CD14-positive monocyte (primary cell): ENCODE measurements at regions of chr9 and their contacts with region 1.

Region 1: DNA sequence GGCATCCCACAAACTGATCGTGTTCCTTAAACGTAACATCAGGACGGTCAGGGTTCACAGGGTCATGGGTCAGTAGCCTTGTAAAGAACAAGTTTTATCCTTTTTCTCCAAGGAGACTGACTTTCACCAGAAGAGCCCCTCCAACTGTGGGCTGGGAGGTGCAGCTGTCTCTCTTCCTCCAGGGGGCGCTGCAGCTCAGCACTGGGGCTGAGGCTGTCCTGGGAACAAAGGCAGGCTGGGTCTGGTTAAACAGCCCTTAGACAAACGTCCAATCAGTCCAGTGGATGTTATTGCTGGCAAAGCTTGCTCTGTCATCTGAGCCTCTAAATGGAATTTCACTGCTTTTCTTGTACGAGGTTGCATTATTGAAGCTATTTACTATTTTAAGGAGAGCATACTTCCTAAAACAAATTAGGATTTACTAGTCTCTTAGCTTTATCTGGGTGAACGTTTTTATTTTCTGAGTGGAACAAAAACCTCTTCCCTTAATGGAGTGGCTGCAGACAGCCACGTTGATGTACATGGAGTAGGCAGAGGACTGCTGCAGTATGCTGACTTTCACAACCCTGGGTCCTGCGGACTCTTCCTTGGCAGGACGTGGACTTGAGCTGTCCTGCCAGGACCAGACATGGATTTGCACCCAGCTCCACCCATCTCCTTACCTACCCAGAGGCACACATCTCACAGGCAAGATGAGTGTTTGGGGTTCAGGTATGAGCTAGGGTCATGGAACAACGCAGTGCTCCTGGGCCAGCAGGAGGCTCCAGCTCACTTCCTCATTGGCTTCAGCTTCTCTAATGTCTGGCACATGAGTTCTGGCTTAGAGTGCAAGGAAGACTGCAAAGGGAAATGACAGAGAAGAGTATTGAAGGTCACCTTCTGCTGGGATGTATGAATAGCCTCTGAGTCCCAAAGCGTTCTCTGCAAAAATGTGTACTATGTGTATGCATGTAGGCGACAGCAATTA is 7.8 kb downstream of the EXOSC2 start:
- DNase-seq: peak; percentile 36 to 53 (median 48)
- H3K4me3 ChIP-seq: no peak overlapping the region
- H3K4me3 Mint-ChIP-seq: no peak overlapping the region
- H3K27ac ChIP-seq: no peak overlapping the region
- H3K27ac Mint-ChIP-seq: peak overlapping the region in 1 of 7 donors; percentile 41
- H3K4me1 ChIP-seq: no peaks in the 10 kb centered on the region
- H3K4me1 Mint-ChIP-seq: peaks cover 8% of the 10 kb centered on the region
- H3K27me3 ChIP-seq: no peaks in the 10 kb centered on the region
- H3K27me3 Mint-ChIP-seq: peaks cover 0 to 2% (median 1%) of the 10 kb centered on the region in 3 donors
- CTCF ChIP-seq: peak; percentile 95

Region 2: DNA sequence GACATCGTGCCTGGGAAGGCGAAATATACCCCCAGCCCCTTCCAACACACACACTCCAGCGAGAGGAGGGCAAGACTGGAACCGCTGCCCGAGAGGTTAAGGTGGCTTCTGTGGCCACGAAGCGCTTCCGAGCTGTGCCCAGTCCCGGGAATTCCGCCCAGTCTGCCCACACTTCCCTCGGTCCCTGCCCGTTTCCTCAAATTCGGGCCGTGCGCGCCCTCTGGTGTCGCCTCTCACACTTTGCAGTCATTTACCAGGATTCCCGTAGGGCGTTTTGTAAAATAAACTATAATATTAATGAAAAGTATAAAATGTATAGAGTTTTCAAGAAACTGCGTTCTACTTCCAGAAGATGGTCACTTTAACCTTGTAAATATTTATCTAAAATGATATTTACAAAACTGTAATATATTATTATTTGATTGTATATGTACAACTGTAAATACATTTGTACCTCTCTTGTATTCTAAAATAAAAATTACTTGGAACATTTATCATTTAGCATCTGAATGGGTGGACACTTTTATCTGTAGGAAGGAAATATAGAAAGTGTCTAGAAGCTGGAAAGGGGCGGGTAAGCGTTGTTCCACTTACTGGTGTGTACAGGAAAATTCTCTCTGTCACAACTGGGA is 18.7 kb before region 1 on chr9:
- intact Hi-C with region 1: no loop called
- DNase-seq: peak; percentile 36 to 79 (median 61)
- H3K4me3 ChIP-seq: peak overlapping the region; percentile 31 to 81 (median 44)
- H3K4me3 Mint-ChIP-seq: peak overlapping the region; percentile 83 to 94
- H3K27ac ChIP-seq: no peak overlapping the region
- H3K27ac Mint-ChIP-seq: peak overlapping the region in 1 of 7 donors; percentile 38
- H3K4me1 ChIP-seq: peaks cover 13 to 16% of the 10 kb centered on the region in 2 donors
- H3K4me1 Mint-ChIP-seq: peaks cover 11% of the 10 kb centered on the region
- H3K27me3 ChIP-seq: peaks cover 2 to 28% of the 10 kb centered on the region in 2 donors
- H3K27me3 Mint-ChIP-seq: peaks cover 24 to 54% (median 32%) of the 10 kb centered on the region in 3 donors
- CTCF ChIP-seq: peak; percentile 95

Region 3: GRCh38 chr9:130732131-130732530 is 30.8 kb after region 1 on chr9:
- intact Hi-C with region 1: no loop called
- DNase-seq: no peak
- H3K4me3 ChIP-seq: no peak overlapping the region
- H3K4me3 Mint-ChIP-seq: no peak overlapping the region
- H3K27ac ChIP-seq: no peak overlapping the region
- H3K27ac Mint-ChIP-seq: no peak overlapping the region
- H3K4me1 ChIP-seq: peaks cover 0 to 4% of the 10 kb centered on the region in 2 donors
- H3K4me1 Mint-ChIP-seq: peaks cover 6% of the 10 kb centered on the region
- H3K27me3 ChIP-seq: no peaks in the 10 kb centered on the region
- H3K27me3 Mint-ChIP-seq: no peaks in the 10 kb centered on the region
- CTCF ChIP-seq: no peak

Region 4: GRCh38 chr9:130860458-130861316 is 159.3 kb after region 1 on chr9:
- intact Hi-C with region 1: loop called (anchors 2 to 5 kb)
- DNase-seq: peak; percentile 1 to 28 (median 8)
- H3K4me3 ChIP-seq: no peak overlapping the region
- H3K4me3 Mint-ChIP-seq: peak overlapping the region in 1 of 2 donors; percentile 28
- H3K27ac ChIP-seq: no peak overlapping the region
- H3K27ac Mint-ChIP-seq: peak overlapping the region in 3 of 7 donors; percentile 24 to 38 (median 26)
- H3K4me1 ChIP-seq: no peaks in the 10 kb centered on the region
- H3K4me1 Mint-ChIP-seq: peaks cover 4% of the 10 kb centered on the region
- H3K27me3 ChIP-seq: no peaks in the 10 kb centered on the region
- H3K27me3 Mint-ChIP-seq: peaks cover 0 to 2% (median 0%) of the 10 kb centered on the region in 3 donors
- CTCF ChIP-seq: no peak

Region 5: DNA sequence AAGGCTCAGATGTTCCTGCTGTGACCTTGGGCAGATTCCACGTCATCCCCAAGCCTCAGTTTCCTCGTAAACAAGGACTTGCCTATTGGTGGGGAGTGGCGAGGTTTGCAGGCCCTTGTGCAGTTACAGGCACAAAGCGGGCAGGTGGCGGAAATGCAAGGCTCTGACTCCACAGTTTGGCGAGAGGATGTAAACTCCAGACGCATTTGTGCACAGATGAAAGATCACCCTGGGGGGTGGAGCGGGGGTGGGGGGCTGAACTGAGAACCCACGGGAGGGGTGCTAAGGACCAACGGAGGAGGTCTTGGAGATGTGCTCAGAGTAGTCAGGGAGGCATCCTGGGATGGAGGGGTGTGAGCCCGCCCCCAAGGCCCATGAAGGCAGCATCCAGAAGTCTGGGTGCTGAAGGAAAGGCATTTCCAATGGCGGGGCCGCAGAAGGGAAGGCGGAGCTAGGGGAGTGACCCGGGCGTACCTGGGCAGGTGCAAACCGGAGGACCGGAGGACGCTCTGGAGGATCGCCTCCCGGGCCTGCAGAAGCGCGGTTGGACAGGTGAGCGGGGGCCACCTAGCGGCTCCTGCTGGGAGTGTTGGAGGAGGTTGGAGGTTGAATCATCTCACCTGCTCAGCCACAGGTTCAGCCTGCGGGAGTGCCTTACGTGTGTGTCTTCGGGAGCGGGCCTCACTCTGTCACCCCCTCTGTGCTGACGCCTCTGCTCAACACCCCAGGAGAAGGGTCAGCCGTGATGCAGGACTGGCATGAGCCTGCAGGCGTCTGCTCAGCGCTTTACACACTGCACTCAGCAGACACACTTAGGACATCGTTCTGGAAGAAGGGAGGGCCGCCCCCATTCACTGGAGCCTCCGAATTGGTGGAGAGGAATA is 239.6 kb after region 1 on chr9:
- intact Hi-C with region 1: loop called (anchors 2 to 10 kb)
- DNase-seq: peak; percentile 9 to 42 (median 37)
- H3K4me3 ChIP-seq: no peak overlapping the region
- H3K4me3 Mint-ChIP-seq: peak overlapping the region in 1 of 2 donors; percentile 88
- H3K27ac ChIP-seq: no peak overlapping the region
- H3K27ac Mint-ChIP-seq: no peak overlapping the region
- H3K4me1 ChIP-seq: peaks cover 0 to 10% of the 10 kb centered on the region in 2 donors
- H3K4me1 Mint-ChIP-seq: peaks cover 8% of the 10 kb centered on the region
- H3K27me3 ChIP-seq: peaks cover 20 to 54% of the 10 kb centered on the region in 2 donors
- H3K27me3 Mint-ChIP-seq: peaks cover 46 to 73% (median 61%) of the 10 kb centered on the region in 3 donors
- CTCF ChIP-seq: peak; percentile 95

Region 6: GRCh38 chr9:130997925-130998596 is 296.7 kb after region 1 on chr9:
- intact Hi-C with region 1: loop called (anchors 2 to 10 kb)
- DNase-seq: peak; percentile 39 to 62 (median 42)
- H3K4me3 ChIP-seq: no peak overlapping the region
- H3K4me3 Mint-ChIP-seq: peak overlapping the region in 1 of 2 donors; percentile 44
- H3K27ac ChIP-seq: no peak overlapping the region
- H3K27ac Mint-ChIP-seq: no peak overlapping the region
- H3K4me1 ChIP-seq: peaks cover 32 to 37% of the 10 kb centered on the region in 2 donors
- H3K4me1 Mint-ChIP-seq: peaks cover 8% of the 10 kb centered on the region
- H3K27me3 ChIP-seq: no peaks in the 10 kb centered on the region
- H3K27me3 Mint-ChIP-seq: peaks cover 2 to 14% (median 12%) of the 10 kb centered on the region in 3 donors
- CTCF ChIP-seq: peak; percentile 81

Region 7: GRCh38 chr9:131046581-131047202 is 345.4 kb after region 1 on chr9:
- intact Hi-C with region 1: loop called in 1 of 2 experiments (anchors 5 kb)
- DNase-seq: peak; percentile 44 to 59 (median 58)
- H3K4me3 ChIP-seq: no peak overlapping the region
- H3K4me3 Mint-ChIP-seq: peak overlapping the region; percentile 49 to 65
- H3K27ac ChIP-seq: no peak overlapping the region
- H3K27ac Mint-ChIP-seq: no peak overlapping the region
- H3K4me1 ChIP-seq: peaks cover 8 to 10% of the 10 kb centered on the region in 2 donors
- H3K4me1 Mint-ChIP-seq: peaks cover 10% of the 10 kb centered on the region
- H3K27me3 ChIP-seq: no peaks in the 10 kb centered on the region
- H3K27me3 Mint-ChIP-seq: peaks cover 0 to 5% (median 0%) of the 10 kb centered on the region in 3 donors
- CTCF ChIP-seq: peak; percentile 96